ENCODE measurements at regions of chr4 and their contacts with region 1.

Region 1: GRCh38 chr4:163554870-163555465 is 60.5 kb downstream of the TMA16 start:
- DNase-seq: no peak
- ATAC-seq: no peak
- H3K4me3 ChIP-seq: no peak overlapping the region
- H3K27ac ChIP-seq: no peak overlapping the region
- H3K4me1 ChIP-seq: peaks cover 0 to 50% (median 13%) of the 10 kb centered on the region in 9 donors
- H3K27me3 ChIP-seq: peaks cover 0 to 4% (median 0%) of the 10 kb centered on the region in 7 donors
- CTCF ChIP-seq: peak; percentile 23 to 80 (median 63)

Region 2: GRCh38 chr4:162497564-162498167 is 1057.3 kb before region 1 on chr4:
- intact Hi-C with region 1: loop called in 1 of 10 experiments (anchors 5 kb)
- DNase-seq: no peak
- ATAC-seq: peak; percentile 52 to 88 (median 76)
- H3K4me3 ChIP-seq: peak overlapping the region in 5 of 10 donors; percentile 12 to 32 (median 26)
- H3K27ac ChIP-seq: peak overlapping the region in 1 of 10 donors; percentile 12
- H3K4me1 ChIP-seq: peaks cover 0 to 5% (median 0%) of the 10 kb centered on the region in 9 donors
- H3K27me3 ChIP-seq: no peaks in the 10 kb centered on the region
- CTCF ChIP-seq: peak; percentile 68 to 92 (median 81)

Region 3: DNA sequence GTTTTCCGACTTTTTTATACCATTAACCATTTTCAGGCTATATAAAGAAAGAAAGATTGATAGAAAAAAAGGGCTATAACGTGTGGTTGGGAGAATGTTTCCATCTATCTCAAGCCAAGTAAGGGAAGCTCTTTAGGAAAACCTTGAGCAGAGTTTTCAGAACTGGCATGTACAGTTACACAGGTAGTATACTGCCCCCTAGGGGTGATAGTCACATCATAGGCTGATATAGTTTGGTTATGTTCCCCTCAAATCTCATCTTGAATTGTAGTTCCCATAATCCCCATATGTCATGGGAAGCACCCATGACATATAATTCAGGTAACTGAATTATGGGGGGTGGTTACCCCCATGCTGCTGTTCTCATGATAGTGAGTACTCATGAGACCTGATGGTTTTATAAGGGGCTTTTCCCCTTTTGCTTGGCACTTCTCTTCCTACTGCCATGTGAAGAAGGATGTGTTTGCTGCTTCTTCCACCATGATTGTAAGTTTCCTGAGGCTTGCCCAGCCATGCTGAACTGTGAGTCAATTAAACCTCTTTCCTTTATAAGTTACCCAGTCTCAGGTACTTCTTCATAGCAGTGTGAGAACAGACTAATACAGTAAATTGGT is 126.3 kb after region 1 on chr4:
- intact Hi-C with region 1: loop called in 6 of 10 experiments (anchors 5 to 10 kb)
- DNase-seq: peak in 1 of 2 donors; percentile 7
- ATAC-seq: no peak
- H3K4me3 ChIP-seq: no peak overlapping the region
- H3K27ac ChIP-seq: no peak overlapping the region
- H3K4me1 ChIP-seq: no peaks in the 10 kb centered on the region
- H3K27me3 ChIP-seq: no peaks in the 10 kb centered on the region
- CTCF ChIP-seq: peak; percentile 19 to 71 (median 45)

Region 4: GRCh38 chr4:163726641-163727040 is 171.7 kb after region 1 on chr4:
- intact Hi-C with region 1: no loop called
- DNase-seq: no peak
- ATAC-seq: no peak
- H3K4me3 ChIP-seq: no peak overlapping the region
- H3K27ac ChIP-seq: no peak overlapping the region
- H3K4me1 ChIP-seq: no peaks in the 10 kb centered on the region
- H3K27me3 ChIP-seq: no peaks in the 10 kb centered on the region
- CTCF ChIP-seq: no peak

Region 5: GRCh38 chr4:163795885-163796284 is 240.9 kb after region 1 on chr4:
- intact Hi-C with region 1: no loop called
- DNase-seq: no peak
- ATAC-seq: no peak
- H3K4me3 ChIP-seq: no peak overlapping the region
- H3K27ac ChIP-seq: no peak overlapping the region
- H3K4me1 ChIP-seq: no peaks in the 10 kb centered on the region
- H3K27me3 ChIP-seq: no peaks in the 10 kb centered on the region
- CTCF ChIP-seq: no peak

Region 6: DNA sequence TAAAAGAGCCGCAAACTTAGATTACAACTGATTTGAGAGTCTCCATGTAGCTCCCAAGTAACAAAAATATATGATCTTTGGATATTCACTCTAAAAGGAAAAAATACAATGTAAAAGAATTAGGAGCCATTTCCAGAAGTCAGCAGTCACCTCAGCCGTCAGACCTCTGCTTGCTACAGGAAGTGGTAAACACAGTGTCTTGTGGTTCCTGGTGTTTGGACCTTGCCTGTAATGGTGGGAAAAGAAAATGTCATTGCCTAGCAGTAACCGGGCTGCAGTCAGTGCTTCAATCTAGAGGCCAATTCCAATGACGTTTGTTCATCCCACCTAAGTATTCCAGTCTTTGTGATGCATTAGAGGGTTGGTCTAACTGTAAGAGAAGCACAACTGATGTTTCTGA is 1170.1 kb after region 1 on chr4:
- intact Hi-C with region 1: loop called (anchors 2 to 10 kb)
- DNase-seq: no peak
- ATAC-seq: no peak
- H3K4me3 ChIP-seq: no peak overlapping the region
- H3K27ac ChIP-seq: no peak overlapping the region
- H3K4me1 ChIP-seq: no peaks in the 10 kb centered on the region
- H3K27me3 ChIP-seq: peaks cover 0 to 5% (median 0%) of the 10 kb centered on the region in 7 donors
- CTCF ChIP-seq: no peak

Region 7: GRCh38 chr4:164748375-164748774 is 1193.4 kb after region 1 on chr4:
- intact Hi-C with region 1: loop called in 1 of 10 experiments (anchors 5 kb)
- DNase-seq: no peak
- ATAC-seq: no peak
- H3K4me3 ChIP-seq: no peak overlapping the region
- H3K27ac ChIP-seq: no peak overlapping the region
- H3K4me1 ChIP-seq: no peaks in the 10 kb centered on the region
- H3K27me3 ChIP-seq: no peaks in the 10 kb centered on the region
- CTCF ChIP-seq: peak in 7 of 9 donors; percentile 27 to 46 (median 40)

Measured in heart right ventricle (tissue), 16 donors.